Heart right ventricle (tissue), 16 donors: ENCODE measurements at regions of chr7 and their contacts with region 1.

Region 1: GRCh38 chr7:128425850-128426249 is 16.1 kb upstream of the IMPDH1 start:
- DNase-seq: peak; percentile 59 to 66
- ATAC-seq: peak in 6 of 8 donors; percentile 47 to 71 (median 54)
- H3K4me3 ChIP-seq: no peak overlapping the region
- H3K27ac ChIP-seq: no peak overlapping the region
- H3K4me1 ChIP-seq: peaks cover 0 to 23% (median 4%) of the 10 kb centered on the region in 9 donors
- H3K27me3 ChIP-seq: no peaks in the 10 kb centered on the region
- CTCF ChIP-seq: peak; percentile 67 to 93 (median 88)

Region 2: DNA sequence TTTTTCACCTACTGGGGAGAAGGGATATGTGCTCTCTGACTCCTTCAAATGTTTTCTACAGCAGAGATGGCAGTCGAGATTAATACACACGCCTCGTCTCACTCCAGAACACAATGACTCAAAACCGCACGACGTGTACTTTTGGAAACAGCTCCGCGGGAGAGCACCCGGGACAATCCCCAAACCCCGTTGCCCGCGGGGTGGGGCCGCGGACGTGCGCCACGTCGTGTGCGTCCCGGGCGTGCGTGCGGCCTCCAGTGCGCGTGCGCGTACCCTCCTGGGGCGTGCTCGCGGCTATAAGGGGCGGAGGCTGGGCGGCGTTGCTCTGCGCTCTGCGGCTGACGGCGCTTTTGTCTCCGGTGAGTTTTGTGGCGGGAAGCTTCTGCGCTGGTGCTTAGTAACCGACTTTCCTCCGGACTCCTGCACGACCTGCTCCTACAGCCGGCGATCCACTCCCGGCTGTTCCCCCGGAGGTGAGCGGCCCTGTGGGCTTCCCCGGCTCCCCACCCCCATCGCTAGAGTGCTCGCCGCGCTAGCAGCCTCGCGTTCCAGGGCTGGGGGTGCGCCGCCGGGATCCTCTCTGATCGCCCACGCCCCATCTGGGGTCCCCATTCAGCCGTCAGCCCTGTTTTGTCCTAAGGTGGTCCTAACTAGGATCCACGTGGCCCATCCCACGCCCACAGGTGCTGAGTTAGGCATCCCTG is 29.9 kb after region 1 on chr7 and contains the start of gene HILPDA:
- intact Hi-C with region 1: loop called (anchors 1 to 5 kb)
- DNase-seq: peak; percentile 92 to 96
- ATAC-seq: peak; percentile 93 to 97 (median 96)
- H3K4me3 ChIP-seq: peak within 1 kb of the TSS; percentile 69 to 97 (median 84)
- H3K27ac ChIP-seq: peak within 1 kb of the TSS; percentile 86 to 98 (median 94)
- H3K4me1 ChIP-seq: peaks cover 9 to 62% (median 41%) of the 10 kb centered on the region in 9 donors
- H3K27me3 ChIP-seq: no peaks in the 10 kb centered on the region
- CTCF ChIP-seq: no peak
- total RNA-seq, gene HILPDA: 4.5 to 65.0 (median 6.7) TPM